Body of pancreas (tissue), 4 donors: ENCODE measurements at regions of chr2 and their contacts with region 1.

Region 1: GRCh38 chr2:198127627-198128026 is 323.2 kb downstream of the PLCL1 start:
- DNase-seq: peak; percentile 33 to 48 (median 44)
- ATAC-seq: peak; percentile 65
- H3K4me3 ChIP-seq: no peak overlapping the region
- H3K27ac ChIP-seq: no peak overlapping the region
- H3K4me1 ChIP-seq: no peaks in the 10 kb centered on the region
- H3K27me3 ChIP-seq: no peaks in the 10 kb centered on the region
- CTCF ChIP-seq: peak; percentile 27 to 74 (median 60)
- POLR2A ChIP-seq: no peak

Region 2: GRCh38 chr2:197799068-197799467 is 328.6 kb before region 1 on chr2:
- intact Hi-C with region 1: loop called (anchors 5 kb)
- DNase-seq: no peak
- ATAC-seq: no peak
- H3K4me3 ChIP-seq: no peak overlapping the region
- H3K27ac ChIP-seq: no peak overlapping the region
- H3K4me1 ChIP-seq: peaks cover 5% of the 10 kb centered on the region
- H3K27me3 ChIP-seq: no peaks in the 10 kb centered on the region
- CTCF ChIP-seq: no peak
- POLR2A ChIP-seq: no peak

Region 3: DNA sequence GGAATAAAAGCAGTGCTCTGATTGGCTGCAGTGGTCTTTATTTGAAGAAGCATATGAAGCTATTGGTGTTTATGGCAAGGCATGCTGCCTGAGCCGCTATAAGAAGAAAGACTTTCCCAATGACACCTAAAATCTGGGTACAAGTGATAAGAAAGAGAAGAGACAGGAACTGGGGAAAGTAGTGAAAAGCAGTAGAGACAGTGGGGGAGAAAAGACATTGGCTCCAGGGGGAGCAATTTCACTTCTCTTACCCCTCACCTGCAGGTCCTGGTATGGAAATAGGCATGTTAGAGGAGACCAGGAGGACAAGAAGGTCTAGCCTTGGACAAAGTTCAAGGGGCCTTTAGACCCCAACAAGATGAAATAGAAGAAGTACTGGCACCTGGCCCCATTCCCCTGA is 276.2 kb before region 1 on chr2:
- intact Hi-C with region 1: no loop called
- DNase-seq: no peak
- ATAC-seq: no peak
- H3K4me3 ChIP-seq: no peak overlapping the region
- H3K27ac ChIP-seq: no peak overlapping the region
- H3K4me1 ChIP-seq: no peaks in the 10 kb centered on the region
- H3K27me3 ChIP-seq: no peaks in the 10 kb centered on the region
- CTCF ChIP-seq: peak in 3 of 7 experiments; percentile 9 to 28 (median 24)
- POLR2A ChIP-seq: no peak

Region 4: GRCh38 chr2:198036029-198036879 is 91.4 kb before region 1 on chr2:
- intact Hi-C with region 1: no loop called
- DNase-seq: no peak
- ATAC-seq: no peak
- H3K4me3 ChIP-seq: no peak overlapping the region
- H3K27ac ChIP-seq: no peak overlapping the region
- H3K4me1 ChIP-seq: no peaks in the 10 kb centered on the region
- H3K27me3 ChIP-seq: no peaks in the 10 kb centered on the region
- CTCF ChIP-seq: no peak
- POLR2A ChIP-seq: no peak

Region 5: GRCh38 chr2:198351647-198352046 is 224.0 kb after region 1 on chr2:
- intact Hi-C with region 1: no loop called
- DNase-seq: no peak
- ATAC-seq: no peak
- H3K4me3 ChIP-seq: no peak overlapping the region
- H3K27ac ChIP-seq: no peak overlapping the region
- H3K4me1 ChIP-seq: no peaks in the 10 kb centered on the region
- H3K27me3 ChIP-seq: no peaks in the 10 kb centered on the region
- CTCF ChIP-seq: no peak
- POLR2A ChIP-seq: no peak